IMR-90 (cell line): ENCODE measurements at regions of chr14 and their contacts with region 1.

Region 1: DNA sequence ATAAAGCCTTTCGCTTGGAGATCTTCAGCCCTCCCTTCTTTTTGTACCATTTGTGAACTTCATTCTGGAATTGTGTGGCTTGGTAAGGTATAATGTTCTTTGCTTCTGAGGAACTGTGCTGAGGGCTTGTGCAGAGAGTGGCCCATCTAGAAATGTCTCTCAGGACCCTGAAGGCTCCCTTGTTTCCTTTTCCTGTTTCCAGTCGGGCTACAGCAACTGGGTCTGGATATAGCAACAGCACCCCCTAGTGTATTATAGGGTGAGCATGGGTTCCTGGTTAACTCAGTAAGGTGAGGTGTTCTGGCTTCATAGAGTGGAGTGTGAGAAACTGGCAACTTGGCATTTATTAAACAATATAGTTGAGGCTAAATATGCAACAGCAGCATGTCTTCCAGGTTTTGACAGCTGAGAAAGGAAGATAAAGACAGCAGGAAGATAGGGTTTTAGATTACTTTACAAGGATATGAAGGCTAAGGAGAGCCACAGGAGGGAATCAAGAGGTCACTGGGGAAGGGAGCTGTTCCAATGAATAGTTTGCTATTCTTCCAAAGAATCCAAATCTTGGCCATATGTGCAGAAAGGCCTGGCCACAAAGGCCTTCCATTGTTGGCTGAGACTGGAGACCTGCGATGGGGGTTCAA is 49.1 kb upstream of the RNU6-8 start:
- DNase-seq: peak; percentile 75
- ATAC-seq: peak; percentile 90
- H3K4me3 ChIP-seq: no peak overlapping the region
- H3K27ac ChIP-seq: no peak overlapping the region
- H3K4me1 ChIP-seq: peaks cover 2% of the 10 kb centered on the region; the same call in 1 of the 2 replicates
- H3K27me3 ChIP-seq: 0 out of 2 replicates have a peak, but pooled peaks cover 3% of the 10 kb centered on the region
- CTCF ChIP-seq: peak; percentile 94
- POLR2A ChIP-seq: peak; percentile 44; the same call in 1 of the 2 replicates
- RAD21 ChIP-seq: peak; percentile 94

Region 2: GRCh38 chr14:31263485-31264133 is 988.5 kb before region 1 on chr14:
- CTCF ChIA-PET with region 1: no interaction called
- POLR2A ChIA-PET with region 1: no interaction called
- dilution Hi-C with region 1: no loop called
- in situ Hi-C with region 1: no loop called
- intact Hi-C with region 1: no loop called
- DNase-seq: peak; percentile 100
- ATAC-seq: peak; percentile 98
- H3K4me3 ChIP-seq: no peak overlapping the region
- H3K27ac ChIP-seq: peak overlapping the region; percentile 82
- H3K4me1 ChIP-seq: peaks cover 13% of the 10 kb centered on the region
- H3K27me3 ChIP-seq: no peaks in the 10 kb centered on the region
- CTCF ChIP-seq: no peak
- POLR2A ChIP-seq: no peak
- RAD21 ChIP-seq: no peak; the same call in 1 of the 2 replicates

Region 3: DNA sequence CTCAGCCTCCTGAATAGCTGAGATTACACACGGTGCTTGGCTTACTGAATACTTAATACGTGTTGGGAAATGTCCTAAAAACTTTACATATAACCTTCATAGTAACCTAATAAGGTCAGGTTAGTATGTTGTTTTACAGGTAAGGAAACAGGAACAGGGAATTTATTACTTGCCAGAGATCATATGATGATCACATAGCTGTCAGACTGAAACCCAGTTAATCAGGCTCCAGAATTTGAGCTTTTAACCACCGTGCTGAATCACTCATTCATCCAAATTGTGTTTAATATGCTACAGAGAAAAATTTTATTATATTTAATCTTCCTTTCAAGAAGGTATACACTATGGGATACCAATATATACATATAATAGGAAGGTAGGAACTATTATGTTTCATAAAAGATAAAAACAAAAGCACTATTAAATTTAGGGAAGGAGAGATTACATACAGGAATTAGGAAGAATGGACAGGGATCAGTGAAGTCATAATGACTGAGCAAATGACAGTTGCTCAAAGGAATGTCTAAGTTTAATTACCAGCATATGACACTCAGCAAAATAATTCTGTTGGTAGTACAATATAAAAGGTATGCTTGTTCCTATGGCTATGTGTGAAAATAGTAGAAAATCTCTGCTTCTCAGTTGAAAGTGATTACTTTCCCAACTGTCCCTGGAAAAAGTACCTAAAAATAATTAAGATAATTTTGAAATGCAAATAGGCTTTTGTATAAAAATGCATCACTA is 891.1 kb before region 1 on chr14:
- CTCF ChIA-PET with region 1: no interaction called
- POLR2A ChIA-PET with region 1: no interaction called
- dilution Hi-C with region 1: no loop called
- in situ Hi-C with region 1: no loop called
- intact Hi-C with region 1: loop called (anchors 10 kb)
- DNase-seq: peak; percentile 64
- ATAC-seq: peak; percentile 66
- H3K4me3 ChIP-seq: no peak overlapping the region
- H3K27ac ChIP-seq: no peak overlapping the region
- H3K4me1 ChIP-seq: peaks cover 3% of the 10 kb centered on the region
- H3K27me3 ChIP-seq: no peaks in the 10 kb centered on the region
- CTCF ChIP-seq: no peak
- POLR2A ChIP-seq: no peak
- RAD21 ChIP-seq: no peak

Region 4: DNA sequence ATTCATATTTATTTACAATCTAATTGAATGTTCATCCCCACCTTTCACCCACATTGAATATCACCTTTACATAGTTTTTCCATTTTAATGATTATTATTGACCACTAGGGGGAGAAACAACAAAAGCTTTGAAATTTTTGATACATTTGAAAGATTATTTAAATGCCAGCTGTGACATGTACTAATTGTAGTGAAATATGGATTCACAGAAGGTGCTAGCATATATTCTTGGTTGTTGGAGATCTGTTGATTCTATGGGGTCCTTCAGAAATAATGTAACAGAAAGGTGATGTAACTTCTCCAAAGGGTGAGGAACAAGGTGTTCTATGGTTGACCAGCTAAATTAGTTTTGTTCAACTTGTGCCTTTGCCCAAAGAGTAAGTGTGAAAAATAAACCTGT is 741.9 kb before region 1 on chr14:
- CTCF ChIA-PET with region 1: interaction called, 3 read pairs
- POLR2A ChIA-PET with region 1: no interaction called
- dilution Hi-C with region 1: no loop called
- in situ Hi-C with region 1: loop called (anchors 5 kb)
- intact Hi-C with region 1: loop called (anchors 1 kb)
- DNase-seq: peak; percentile 10
- ATAC-seq: no peak
- H3K4me3 ChIP-seq: no peak overlapping the region
- H3K27ac ChIP-seq: no peak overlapping the region
- H3K4me1 ChIP-seq: peaks cover 5% of the 10 kb centered on the region
- H3K27me3 ChIP-seq: peaks cover 3% of the 10 kb centered on the region; the same call in 1 of the 2 replicates
- CTCF ChIP-seq: peak; percentile 55
- POLR2A ChIP-seq: no peak
- RAD21 ChIP-seq: peak; percentile 58

Region 5: DNA sequence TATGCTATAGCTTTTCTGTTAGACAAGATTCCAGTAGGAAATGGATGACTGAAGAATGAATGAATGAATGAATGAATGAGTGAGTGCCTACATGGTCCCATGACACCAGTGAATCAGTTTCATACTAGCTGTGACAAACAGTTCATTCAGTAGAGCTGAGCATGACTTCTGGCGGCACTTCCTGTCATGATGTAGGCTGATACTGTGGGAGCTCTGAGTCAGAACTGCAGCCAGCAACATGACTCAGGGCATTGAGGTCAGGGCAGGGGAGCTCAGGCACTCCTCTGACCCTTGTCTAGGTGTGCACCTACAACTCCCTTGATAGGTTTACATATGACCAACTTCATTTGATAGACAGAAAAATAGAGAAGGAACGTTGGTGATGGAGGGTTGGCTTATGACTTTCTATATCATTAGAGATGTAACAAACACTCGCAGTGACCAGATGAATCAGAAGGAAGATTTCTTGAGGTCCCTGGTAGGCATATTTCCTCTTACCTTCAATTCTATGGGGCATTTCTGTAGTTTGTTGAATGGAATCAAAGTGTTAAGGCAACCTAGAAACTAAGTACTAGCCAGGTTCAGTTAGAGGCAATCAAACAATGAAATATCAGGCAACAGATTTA is 314.3 kb before region 1 on chr14:
- CTCF ChIA-PET with region 1: no interaction called
- POLR2A ChIA-PET with region 1: no interaction called
- dilution Hi-C with region 1: no loop called
- in situ Hi-C with region 1: loop called (anchors 25 kb)
- intact Hi-C with region 1: loop called (anchors 1 kb)
- DNase-seq: peak; percentile 86
- ATAC-seq: peak; percentile 85
- H3K4me3 ChIP-seq: no peak overlapping the region
- H3K27ac ChIP-seq: no peak overlapping the region
- H3K4me1 ChIP-seq: no peaks in the 10 kb centered on the region
- H3K27me3 ChIP-seq: peaks cover 2% of the 10 kb centered on the region; the same call in 1 of the 2 replicates
- CTCF ChIP-seq: no peak
- POLR2A ChIP-seq: no peak
- RAD21 ChIP-seq: no peak

Region 6: DNA sequence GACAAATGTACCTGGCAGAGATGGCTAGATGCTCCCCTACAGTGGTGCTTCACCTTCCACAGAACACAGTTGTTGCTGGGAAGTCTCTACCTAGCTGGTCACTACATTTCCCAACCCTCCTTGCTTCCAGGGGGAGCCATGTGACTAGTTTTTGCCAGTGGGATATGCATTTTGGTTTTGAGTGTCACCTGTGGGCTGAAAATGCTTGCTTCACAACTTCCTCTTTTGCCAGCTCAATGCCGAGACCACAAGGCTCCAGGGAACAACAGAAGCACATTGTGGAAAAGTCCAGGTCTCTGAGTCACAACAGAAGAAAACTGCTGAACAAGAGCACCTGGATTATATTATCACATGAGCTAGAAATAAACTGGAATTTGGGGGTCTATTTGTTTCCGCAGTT is 223.6 kb before region 1 on chr14:
- CTCF ChIA-PET with region 1: no interaction called
- POLR2A ChIA-PET with region 1: no interaction called
- dilution Hi-C with region 1: no loop called
- in situ Hi-C with region 1: no loop called
- intact Hi-C with region 1: no loop called
- DNase-seq: no peak
- ATAC-seq: no peak
- H3K4me3 ChIP-seq: no peak overlapping the region
- H3K27ac ChIP-seq: no peak overlapping the region
- H3K4me1 ChIP-seq: no peaks in the 10 kb centered on the region; the same call in 1 of the 2 replicates
- H3K27me3 ChIP-seq: no peaks in the 10 kb centered on the region; the same call in 1 of the 2 replicates
- CTCF ChIP-seq: no peak
- POLR2A ChIP-seq: no peak
- RAD21 ChIP-seq: no peak

Region 7: DNA sequence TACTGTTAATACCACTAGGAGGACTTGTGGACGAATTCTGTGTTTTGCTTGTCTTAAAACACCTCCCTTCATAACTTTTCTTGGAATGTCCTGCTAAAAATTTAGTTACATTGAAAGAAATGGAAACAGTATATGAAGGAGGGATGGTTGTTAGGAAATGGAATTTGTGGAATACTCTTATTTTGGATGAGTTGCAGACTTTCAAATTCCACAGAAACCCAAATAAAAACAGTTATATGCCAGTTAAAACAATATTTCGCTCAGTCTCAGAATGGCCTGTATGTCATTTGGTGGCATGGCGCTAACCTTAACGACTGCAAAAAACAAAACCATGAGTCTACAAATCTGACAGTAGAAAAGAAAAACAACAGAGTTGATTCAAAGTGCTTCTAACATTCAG is 187.2 kb before region 1 on chr14:
- CTCF ChIA-PET with region 1: no interaction called
- POLR2A ChIA-PET with region 1: no interaction called
- dilution Hi-C with region 1: no loop called
- in situ Hi-C with region 1: loop called (anchors 5 kb)
- intact Hi-C with region 1: no loop called
- DNase-seq: no peak
- ATAC-seq: no peak
- H3K4me3 ChIP-seq: no peak overlapping the region
- H3K27ac ChIP-seq: no peak overlapping the region
- H3K4me1 ChIP-seq: no peaks in the 10 kb centered on the region
- H3K27me3 ChIP-seq: peaks cover 5% of the 10 kb centered on the region
- CTCF ChIP-seq: no peak
- POLR2A ChIP-seq: no peak
- RAD21 ChIP-seq: no peak

Region 8: GRCh38 chr14:32370720-32371119 is 118.6 kb after region 1 on chr14:
- CTCF ChIA-PET with region 1: interaction called, 3 read pairs
- POLR2A ChIA-PET with region 1: no interaction called
- dilution Hi-C with region 1: no loop called
- in situ Hi-C with region 1: no loop called
- intact Hi-C with region 1: loop called (anchors 5 kb)
- DNase-seq: peak; percentile 89
- ATAC-seq: peak; percentile 83
- H3K4me3 ChIP-seq: no peak overlapping the region
- H3K27ac ChIP-seq: no peak overlapping the region
- H3K4me1 ChIP-seq: peaks cover 18% of the 10 kb centered on the region
- H3K27me3 ChIP-seq: no peaks in the 10 kb centered on the region
- CTCF ChIP-seq: no peak
- POLR2A ChIP-seq: no peak
- RAD21 ChIP-seq: no peak

Region 9: DNA sequence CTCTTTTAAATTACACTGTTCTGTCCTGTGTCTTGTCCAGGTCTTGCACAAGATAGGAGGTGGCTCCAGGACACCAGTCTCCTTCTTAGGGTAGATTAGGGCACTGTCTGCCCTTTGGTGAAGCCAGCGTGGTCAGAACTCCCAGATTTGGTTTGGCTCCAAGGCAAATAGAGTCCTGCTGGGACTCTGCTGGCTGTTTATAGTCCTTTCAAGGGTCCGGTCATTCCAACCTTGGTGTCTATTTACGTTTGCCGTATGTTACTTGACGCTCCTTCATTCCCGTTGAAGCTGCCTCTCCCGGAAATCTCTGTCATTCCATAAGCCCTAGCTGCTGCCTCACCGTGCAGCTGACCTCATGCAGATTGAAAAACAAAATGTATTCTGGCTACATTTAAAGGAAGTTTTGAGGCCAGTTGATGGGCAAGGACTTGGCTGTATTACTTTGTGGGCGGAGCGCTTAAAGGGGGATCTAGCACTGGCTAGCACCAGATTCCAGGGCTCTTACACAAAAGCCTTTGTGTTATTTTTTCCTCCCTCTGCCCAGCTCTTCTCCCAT is 257.6 kb after region 1 on chr14:
- CTCF ChIA-PET with region 1: interaction called, 3 read pairs
- POLR2A ChIA-PET with region 1: no interaction called
- dilution Hi-C with region 1: no loop called
- in situ Hi-C with region 1: no loop called
- intact Hi-C with region 1: loop called (anchors 2 kb)
- DNase-seq: peak; percentile 97
- ATAC-seq: peak; percentile 87
- H3K4me3 ChIP-seq: no peak overlapping the region
- H3K27ac ChIP-seq: peak overlapping the region; percentile 83
- H3K4me1 ChIP-seq: peaks cover 17% of the 10 kb centered on the region
- H3K27me3 ChIP-seq: no peaks in the 10 kb centered on the region
- CTCF ChIP-seq: no peak
- POLR2A ChIP-seq: peak; percentile 40; the same call in 1 of the 2 replicates
- RAD21 ChIP-seq: no peak